HCT116 (cell line): ENCODE measurements at regions of chr5 and their contacts with region 1.

Region 1: GRCh38 chr5:61055434-61056006 is 106.7 kb downstream of the SMIM15 start:
- DNase-seq: no peak
- ATAC-seq: no peak
- H3K4me3 ChIP-seq: no peak overlapping the region
- H3K27ac ChIP-seq: no peak overlapping the region
- H3K4me1 ChIP-seq: peaks cover 32 to 41% of the 10 kb centered on the region in 2 experiments
- H3K27me3 ChIP-seq: no peaks in the 10 kb centered on the region
- CTCF ChIP-seq: peak; percentile 61 to 81 (median 66); a peak in 5 of 6 replicates
- POLR2A ChIP-seq: no peak
- RAD21 ChIP-seq: peak; percentile 85

Region 2: GRCh38 chr5:60677844-60678664 is 377.5 kb before region 1 on chr5:
- CTCF ChIA-PET with region 1: no interaction called
- POLR2A ChIA-PET with region 1: no interaction called
- RAD21 ChIA-PET with region 1: no interaction called
- intact Hi-C with region 1: loop called (anchors 5 kb)
- DNase-seq: no peak
- ATAC-seq: peak; percentile 85
- H3K4me3 ChIP-seq: no peak overlapping the region
- H3K27ac ChIP-seq: no peak overlapping the region
- H3K4me1 ChIP-seq: peaks cover 0 to 6% of the 10 kb centered on the region in 2 experiments; a peak in 1 of 4 replicates
- H3K27me3 ChIP-seq: no peaks in the 10 kb centered on the region
- CTCF ChIP-seq: peak; percentile 35 to 69 (median 63); a peak in 5 of 6 replicates
- POLR2A ChIP-seq: no peak
- RAD21 ChIP-seq: peak; percentile 70

Region 3: DNA sequence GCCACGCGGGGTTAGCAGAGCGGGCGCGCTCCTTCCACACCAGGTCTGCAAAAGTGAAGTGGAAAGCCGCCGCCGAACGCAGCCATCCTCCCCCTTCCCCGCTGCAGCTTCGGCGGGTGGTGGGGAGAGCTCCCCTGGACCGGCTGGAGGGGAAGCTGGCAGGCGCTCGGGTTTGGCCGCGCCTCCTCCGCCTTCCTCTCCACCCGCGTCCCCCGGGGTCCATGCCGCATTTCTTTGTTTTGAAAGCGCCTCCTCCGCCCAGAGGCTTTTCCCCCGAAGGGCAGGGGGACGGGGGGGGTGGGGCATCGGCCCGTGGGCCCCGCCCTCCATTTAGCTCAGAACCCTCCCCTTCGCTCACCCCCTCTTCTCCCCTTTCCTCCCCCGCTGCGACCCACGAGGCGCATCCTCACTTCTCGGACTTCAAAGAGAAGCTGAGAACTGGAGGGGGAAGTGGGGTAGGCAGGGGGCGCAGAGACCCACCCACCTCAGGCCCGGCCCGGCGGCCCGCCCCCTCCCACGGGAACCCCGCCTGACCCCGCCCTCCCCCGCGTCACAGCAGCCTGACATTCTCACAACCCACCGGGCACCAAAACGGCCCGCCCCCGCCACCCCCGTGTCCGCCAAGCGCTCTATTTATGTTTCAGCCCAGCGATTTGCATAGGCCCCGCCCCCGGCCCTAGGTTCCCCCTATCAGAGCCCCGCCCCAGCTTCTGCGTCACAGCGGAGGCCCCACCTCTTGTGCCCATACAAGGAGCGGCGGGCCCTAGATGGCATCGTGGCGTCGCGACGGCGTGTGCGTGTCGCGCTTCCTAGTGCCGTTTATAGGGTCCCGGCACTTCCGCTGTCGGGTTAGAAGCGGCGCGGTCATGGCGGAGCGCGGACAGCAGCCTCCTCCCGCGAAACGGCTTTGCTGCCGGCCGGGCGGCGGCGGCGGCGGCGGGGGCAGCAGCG is 276.2 kb after region 1 on chr5 and contains the start of gene ZSWIM6:
- CTCF ChIA-PET with region 1: no interaction called
- POLR2A ChIA-PET with region 1: no interaction called
- RAD21 ChIA-PET with region 1: no interaction called
- intact Hi-C with region 1: loop called (anchors 2 kb)
- DNase-seq: peak; percentile 96
- ATAC-seq: peak; percentile 80
- H3K4me3 ChIP-seq: peak within 1 kb of the TSS; percentile 76 to 86
- H3K27ac ChIP-seq: peak within 1 kb of the TSS; percentile 75
- H3K4me1 ChIP-seq: peaks cover 9 to 35% of the 10 kb centered on the region in 2 experiments
- H3K27me3 ChIP-seq: no peaks in the 10 kb centered on the region
- CTCF ChIP-seq: no peak
- POLR2A ChIP-seq: peak; percentile 79
- RAD21 ChIP-seq: no peak
- total RNA-seq, gene ZSWIM6: 7.4 TPM

Region 4: DNA sequence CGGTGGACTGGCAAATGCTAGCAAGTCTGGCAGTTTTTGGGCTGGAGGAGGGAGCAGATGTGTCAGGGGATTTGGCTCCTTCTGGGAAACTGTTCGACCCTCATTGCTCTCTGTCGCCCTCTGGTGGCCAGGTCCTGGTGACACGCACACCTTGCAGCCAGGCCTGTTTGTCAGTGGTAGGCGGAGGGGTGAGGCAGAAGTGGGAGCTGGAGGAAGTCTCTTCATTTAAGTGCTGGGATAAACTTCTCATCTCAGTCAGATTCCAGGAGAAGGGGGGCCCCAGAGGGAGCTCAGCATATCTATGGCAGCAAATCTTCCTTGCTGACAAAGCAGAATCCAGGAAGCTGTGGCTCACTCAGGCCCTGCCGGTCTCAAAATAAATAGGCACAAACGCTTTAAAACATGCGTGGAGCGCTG is 603.1 kb after region 1 on chr5:
- CTCF ChIA-PET with region 1: interaction called, 12 read pairs
- POLR2A ChIA-PET with region 1: no interaction called
- RAD21 ChIA-PET with region 1: no interaction called
- intact Hi-C with region 1: loop called (anchors 1 kb)
- DNase-seq: peak; percentile 67
- ATAC-seq: peak; percentile 98
- H3K4me3 ChIP-seq: no peak overlapping the region
- H3K27ac ChIP-seq: no peak overlapping the region
- H3K4me1 ChIP-seq: no peaks in the 10 kb centered on the region
- H3K27me3 ChIP-seq: no peaks in the 10 kb centered on the region
- CTCF ChIP-seq: peak; percentile 65 to 97 (median 91); a peak in 5 of 6 replicates
- POLR2A ChIP-seq: no peak
- RAD21 ChIP-seq: peak; percentile 81

Region 5: DNA sequence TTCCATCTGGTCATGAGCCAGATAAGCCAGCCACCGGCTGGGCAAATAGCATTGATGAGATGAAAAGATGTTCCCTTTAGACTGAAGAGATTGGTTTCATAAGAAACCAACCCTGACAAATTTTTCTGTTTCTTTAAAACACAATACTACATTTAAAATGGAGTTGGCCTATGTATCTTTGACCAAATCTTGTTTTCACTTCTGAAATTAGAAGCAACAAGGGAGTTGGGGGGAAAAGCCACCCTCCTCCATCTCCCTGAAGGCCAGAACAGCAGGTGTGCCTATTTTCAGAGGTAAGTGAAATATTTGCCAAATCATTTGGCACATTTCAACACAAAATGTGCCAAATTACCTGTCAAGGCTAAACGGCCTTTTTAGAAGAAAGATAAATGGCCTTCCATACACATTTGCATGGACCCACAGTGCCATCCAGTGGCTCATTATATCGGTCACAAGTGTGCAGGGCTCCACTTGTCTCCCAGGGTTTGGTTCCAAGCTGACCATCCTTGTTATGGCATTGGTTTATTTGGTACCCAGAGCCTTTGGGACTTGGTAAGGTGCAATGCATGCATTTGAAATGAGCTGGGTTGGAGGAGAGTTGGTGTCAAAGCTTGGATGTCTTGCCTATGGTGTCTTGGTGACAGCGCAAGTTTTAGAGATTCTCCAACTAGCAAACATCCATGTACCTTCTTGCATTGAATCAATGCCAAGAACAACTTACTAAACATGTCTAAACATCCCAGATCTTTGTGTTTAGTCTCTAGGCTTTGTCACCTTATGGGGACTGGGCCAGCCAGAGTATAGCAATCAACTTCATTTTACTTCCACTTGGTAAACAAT is 878.5 kb after region 1 on chr5:
- CTCF ChIA-PET with region 1: no interaction called
- POLR2A ChIA-PET with region 1: no interaction called
- RAD21 ChIA-PET with region 1: no interaction called
- intact Hi-C with region 1: loop called (anchors 5 kb)
- DNase-seq: peak; percentile 34
- ATAC-seq: peak; percentile 87
- H3K4me3 ChIP-seq: no peak overlapping the region
- H3K27ac ChIP-seq: no peak overlapping the region
- H3K4me1 ChIP-seq: no peaks in the 10 kb centered on the region
- H3K27me3 ChIP-seq: no peaks in the 10 kb centered on the region; the same call in 1 of the 2 replicates
- CTCF ChIP-seq: peak; percentile 44 to 66 (median 61); a peak in 5 of 6 replicates
- POLR2A ChIP-seq: no peak
- RAD21 ChIP-seq: peak; percentile 81